T-cell (primary cell): ENCODE measurements at regions of chr11 and their contacts with region 1.

Region 1: GRCh38 chr11:123301013-123301591 is 106.1 kb upstream of the CLMP start:
- DNase-seq: peak in 1 of 35 experiments; percentile 42
- ATAC-seq: peak in 2 of 4 experiments; percentile 16 to 30
- H3K4me3 ChIP-seq: peak overlapping the region in 1 of 2 donors; percentile 6
- H3K4me3 Mint-ChIP-seq: peak overlapping the region; percentile 56 to 64 (median 59)
- H3K27ac ChIP-seq: peak overlapping the region; percentile 25
- H3K27ac Mint-ChIP-seq: peak overlapping the region in 1 of 2 donors; percentile 77
- H3K4me1 ChIP-seq: peaks cover 9 to 34% of the 10 kb centered on the region in 2 experiments
- H3K4me1 Mint-ChIP-seq: peaks cover 35 to 42% (median 36%) of the 10 kb centered on the region in 3 donors
- H3K27me3 ChIP-seq: peaks cover 0 to 4% of the 10 kb centered on the region in 2 experiments
- H3K27me3 Mint-ChIP-seq: peaks cover 4 to 8% of the 10 kb centered on the region in 2 donors

Region 2: GRCh38 chr11:123272565-123272964 is 28.5 kb before region 1 on chr11:
- CTCF ChIA-PET with region 1: no interaction called
- POLR2A ChIA-PET with region 1: no interaction called
- DNase-seq: no peak
- ATAC-seq: no peak
- H3K4me3 ChIP-seq: no peak overlapping the region
- H3K4me3 Mint-ChIP-seq: no peak overlapping the region
- H3K27ac ChIP-seq: no peak overlapping the region
- H3K27ac Mint-ChIP-seq: no peak overlapping the region
- H3K4me1 ChIP-seq: no peaks in the 10 kb centered on the region
- H3K4me1 Mint-ChIP-seq: peaks cover 0 to 3% (median 0%) of the 10 kb centered on the region in 3 donors
- H3K27me3 ChIP-seq: no peaks in the 10 kb centered on the region
- H3K27me3 Mint-ChIP-seq: peaks cover 0 to 5% of the 10 kb centered on the region in 2 donors

Region 3: DNA sequence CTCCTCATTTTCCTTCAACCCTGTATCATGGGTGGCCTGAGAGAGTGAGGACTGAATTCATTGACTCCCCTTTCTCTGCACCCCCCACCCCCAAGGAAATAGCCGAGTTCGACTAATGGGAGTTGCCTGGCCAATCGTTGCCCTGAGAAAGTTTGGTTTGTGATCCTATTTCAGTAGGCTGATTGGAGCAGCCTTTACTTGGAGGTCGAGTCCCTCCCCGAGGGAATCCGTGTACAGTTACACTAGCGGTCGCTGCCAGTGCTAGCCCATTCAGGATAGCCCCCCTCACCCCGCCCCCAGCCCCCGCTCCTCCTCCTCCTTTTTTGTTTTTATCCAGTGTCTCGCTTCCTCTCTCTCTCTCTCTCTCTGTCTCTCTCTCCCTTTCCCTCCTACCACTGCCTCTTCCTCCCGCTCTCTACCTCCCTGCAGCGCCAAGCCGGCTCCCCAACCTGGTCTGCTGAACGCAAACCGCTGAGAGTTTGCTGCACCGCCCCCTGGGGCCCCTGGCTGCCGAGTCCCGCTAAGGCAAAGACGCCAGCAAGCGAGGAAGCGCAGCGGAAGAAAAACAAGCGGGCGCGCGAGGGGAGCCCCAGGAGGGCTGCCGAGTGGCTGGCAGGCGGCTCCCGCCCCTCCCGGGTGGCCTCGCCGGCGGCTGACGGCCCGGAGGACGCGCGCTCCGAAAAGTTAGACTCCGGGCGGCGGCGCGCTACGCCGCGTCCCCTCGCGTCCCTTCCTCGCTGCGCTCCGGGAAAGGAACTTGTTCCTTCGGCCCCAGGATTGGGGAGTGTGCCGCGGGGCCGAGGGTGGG is 129.0 kb after region 1 on chr11 and contains the start of gene GRAMD1B:
- CTCF ChIA-PET with region 1: interaction called in 1 of 2 experiments, 12 read pairs
- POLR2A ChIA-PET with region 1: no interaction called
- DNase-seq: peak; percentile 59 to 87 (median 77)
- ATAC-seq: peak; percentile 85 to 89 (median 86)
- H3K4me3 ChIP-seq: peak within 1 kb of the TSS; percentile 66 to 71
- H3K4me3 Mint-ChIP-seq: peak within 1 kb of the TSS; percentile 82 to 89 (median 88)
- H3K27ac ChIP-seq: peak within 1 kb of the TSS; percentile 59
- H3K27ac Mint-ChIP-seq: peak within 1 kb of the TSS; percentile 91
- H3K4me1 ChIP-seq: peaks cover 11 to 25% of the 10 kb centered on the region in 2 experiments
- H3K4me1 Mint-ChIP-seq: peaks cover 28 to 39% (median 34%) of the 10 kb centered on the region in 3 donors
- H3K27me3 ChIP-seq: peaks cover 0 to 2% of the 10 kb centered on the region in 2 experiments
- H3K27me3 Mint-ChIP-seq: peaks cover 0 to 2% of the 10 kb centered on the region in 2 donors
- total RNA-seq, gene GRAMD1B: 8.6 to 15.6 (median 10.5) TPM